ENCODE measurements at regions of chr3 and their contacts with region 1.

Region 1: DNA sequence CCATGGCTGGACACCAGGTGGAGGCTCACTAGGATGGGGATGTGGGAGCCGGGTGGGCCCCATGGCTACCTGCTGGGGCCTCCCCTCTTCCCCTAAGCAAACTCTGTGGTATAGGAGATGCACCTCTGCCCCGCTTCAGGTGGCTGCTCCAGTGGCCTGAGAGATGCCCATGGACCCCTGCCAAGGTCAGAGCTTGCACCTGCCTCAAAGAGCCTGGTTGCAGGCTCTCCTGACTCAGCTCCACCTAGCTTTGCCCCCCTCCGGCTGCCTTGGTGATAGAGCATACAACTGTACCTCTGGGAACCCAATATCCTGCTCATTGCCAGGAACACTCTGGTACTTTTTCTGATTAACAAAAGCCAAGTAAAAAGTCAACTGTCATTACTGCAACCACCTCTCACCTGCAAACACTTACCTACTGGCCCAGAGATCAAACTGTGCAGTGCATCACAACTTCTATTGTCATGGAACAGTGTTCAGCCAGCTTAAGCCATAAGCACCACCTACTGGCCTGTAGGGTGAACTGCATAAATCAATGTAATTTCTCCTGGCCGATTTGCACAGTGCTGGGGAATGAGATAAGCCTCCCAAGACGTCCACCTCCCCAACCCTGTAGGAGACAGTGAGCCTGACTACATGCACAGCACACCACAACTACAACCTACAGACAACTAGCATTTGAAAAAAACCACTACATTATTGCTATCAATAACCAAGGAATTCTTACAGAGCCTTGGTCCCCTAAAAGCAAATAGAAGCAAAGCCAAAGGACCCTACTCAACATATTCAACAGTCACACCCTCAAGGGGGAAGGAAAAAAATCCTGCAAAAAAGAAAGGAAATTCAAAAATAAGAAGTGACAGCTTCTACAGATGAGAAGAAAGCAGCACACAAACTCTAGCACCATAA is 352.4 kb upstream of the ARHGEF26 start:
- DNase-seq: no peak
- H3K4me3 ChIP-seq: no peak overlapping the region
- H3K27me3 ChIP-seq: no peaks in the 10 kb centered on the region
- CTCF ChIP-seq: peak; percentile 85

Region 2: GRCh38 chr3:152128356-152128755 is 1640.5 kb before region 1 on chr3:
- CTCF ChIA-PET with region 1: no interaction called
- POLR2A ChIA-PET with region 1: no interaction called
- DNase-seq: peak; percentile 9
- H3K4me3 ChIP-seq: no peak overlapping the region
- H3K27me3 ChIP-seq: no peaks in the 10 kb centered on the region
- CTCF ChIP-seq: no peak

Region 3: GRCh38 chr3:153026026-153026425 is 742.8 kb before region 1 on chr3:
- CTCF ChIA-PET with region 1: interaction called, 13 read pairs
- POLR2A ChIA-PET with region 1: no interaction called
- DNase-seq: no peak
- H3K4me3 ChIP-seq: no peak overlapping the region
- H3K27me3 ChIP-seq: no peaks in the 10 kb centered on the region
- CTCF ChIP-seq: peak; percentile 53

Region 4: GRCh38 chr3:153373606-153374005 is 395.2 kb before region 1 on chr3:
- CTCF ChIA-PET with region 1: no interaction called
- POLR2A ChIA-PET with region 1: no interaction called
- DNase-seq: no peak
- H3K4me3 ChIP-seq: no peak overlapping the region
- H3K27me3 ChIP-seq: no peaks in the 10 kb centered on the region
- CTCF ChIP-seq: no peak

Region 5: GRCh38 chr3:153469162-153469561 is 299.7 kb before region 1 on chr3:
- CTCF ChIA-PET with region 1: no interaction called
- POLR2A ChIA-PET with region 1: no interaction called
- DNase-seq: no peak
- H3K4me3 ChIP-seq: no peak overlapping the region
- H3K27me3 ChIP-seq: no peaks in the 10 kb centered on the region
- CTCF ChIP-seq: no peak